ENCODE measurements at regions of chr2 and their contacts with region 1.

Region 1: DNA sequence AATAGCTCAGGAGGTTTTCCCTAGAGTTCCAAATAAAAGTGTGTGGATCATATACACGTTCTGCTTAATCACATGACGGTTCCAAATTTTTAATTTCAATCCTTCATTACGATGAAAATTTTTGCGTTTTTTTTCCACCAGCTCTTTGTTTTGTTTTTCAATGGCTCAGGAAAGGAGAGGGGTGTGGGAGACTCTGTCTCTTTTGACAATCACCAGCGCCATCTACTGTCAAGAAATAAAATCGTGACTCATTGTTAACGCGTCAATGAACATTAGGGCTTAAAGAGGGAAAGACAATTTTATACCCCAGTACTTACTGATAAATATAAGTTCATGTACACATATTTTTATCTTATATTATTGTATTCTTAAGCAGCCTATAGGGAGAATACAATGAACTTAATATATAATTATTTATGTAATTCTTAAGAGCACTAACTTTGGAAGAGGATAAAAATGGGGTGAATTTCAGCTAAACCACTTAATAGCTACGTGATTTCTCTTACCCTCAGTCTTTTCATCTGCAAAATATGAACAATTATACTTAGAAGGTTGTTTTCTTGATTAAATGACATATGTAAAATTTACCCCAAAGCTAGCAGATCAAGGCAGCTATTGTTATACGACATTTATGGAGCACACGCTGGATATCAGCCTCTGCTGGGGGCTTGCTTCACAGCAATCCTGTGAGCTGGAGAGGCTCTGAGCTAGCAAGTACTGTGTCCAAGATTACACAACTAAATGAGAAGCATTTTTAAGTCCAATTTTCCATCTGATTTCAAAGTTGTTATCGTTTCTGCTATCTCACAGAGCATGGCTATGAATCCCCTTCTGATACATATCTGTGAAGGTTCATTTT is 47.4 kb upstream of the RMDN2 start:
- DNase-seq: peak; percentile 75
- H3K4me3 ChIP-seq: no peak overlapping the region
- H3K27ac ChIP-seq: no peak overlapping the region
- H3K4me1 ChIP-seq: peaks cover 3% of the 10 kb centered on the region
- H3K27me3 ChIP-seq: peaks cover 17% of the 10 kb centered on the region
- CTCF ChIP-seq: peak; percentile 77

Region 2: DNA sequence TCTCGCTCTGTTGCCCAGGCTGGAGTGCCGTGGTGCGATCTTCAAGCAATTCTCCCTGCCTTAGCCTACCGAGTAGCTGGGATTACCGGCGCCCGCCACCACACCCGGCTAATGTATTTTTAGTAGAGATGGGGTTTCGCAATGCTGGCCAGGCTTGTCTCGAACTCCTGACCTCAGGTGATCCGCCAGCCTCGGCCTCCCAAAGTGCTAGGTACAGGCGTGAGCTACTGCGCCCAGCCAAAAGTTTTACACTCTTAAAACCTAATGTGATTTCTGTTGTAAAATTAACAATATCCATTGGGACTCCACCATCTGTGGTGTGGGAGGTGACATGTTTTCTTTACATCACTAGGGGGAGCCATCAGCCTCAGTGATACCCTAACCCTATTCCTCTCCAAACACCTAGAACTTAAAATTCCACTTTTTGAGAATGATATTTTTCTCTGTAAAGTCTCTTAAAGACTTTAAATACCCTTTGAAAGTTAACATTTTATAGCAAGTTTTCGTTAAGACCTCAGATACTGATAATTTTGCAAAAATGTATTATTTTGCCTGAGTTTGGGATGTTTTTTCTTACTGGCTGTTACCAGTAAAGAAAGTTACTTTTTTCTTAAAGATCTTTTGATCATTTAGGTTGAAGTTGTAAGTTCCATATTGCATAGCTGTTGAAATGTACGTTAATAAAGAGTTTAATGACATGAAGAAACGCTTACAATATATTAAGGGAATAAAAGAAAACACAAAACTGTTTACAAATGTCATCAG is 709.3 kb before region 1 on chr2:
- CTCF ChIA-PET with region 1: no interaction called
- POLR2A ChIA-PET with region 1: no interaction called
- intact Hi-C with region 1: loop called (anchors 10 kb)
- DNase-seq: peak; percentile 75
- H3K4me3 ChIP-seq: no peak overlapping the region
- H3K27ac ChIP-seq: no peak overlapping the region
- H3K4me1 ChIP-seq: no peaks in the 10 kb centered on the region
- H3K27me3 ChIP-seq: no peaks in the 10 kb centered on the region
- CTCF ChIP-seq: peak; percentile 83

Region 3: GRCh38 chr2:37832590-37833197 is 45.0 kb before region 1 on chr2:
- CTCF ChIA-PET with region 1: interaction called, 11 read pairs
- POLR2A ChIA-PET with region 1: no interaction called
- intact Hi-C with region 1: no loop called
- DNase-seq: peak; percentile 83
- H3K4me3 ChIP-seq: no peak overlapping the region
- H3K27ac ChIP-seq: no peak overlapping the region
- H3K4me1 ChIP-seq: peaks cover 13% of the 10 kb centered on the region
- H3K27me3 ChIP-seq: no peaks in the 10 kb centered on the region
- CTCF ChIP-seq: peak; percentile 75